ENCODE measurements at regions of chr5 and their contacts with region 1.

Region 1: GRCh38 chr5:172479044-172479783 is 24.9 kb upstream of the SH3PXD2B start:
- DNase-seq: no peak
- H3K4me3 ChIP-seq: no peak overlapping the region
- H3K27ac ChIP-seq: peak overlapping the region; percentile 54
- H3K4me1 ChIP-seq: peaks cover 9% of the 10 kb centered on the region
- H3K27me3 ChIP-seq: no peaks in the 10 kb centered on the region
- CTCF ChIP-seq: peak; percentile 88 to 98 (median 97)
- POLR2A ChIP-seq: no peak

Region 2: GRCh38 chr5:172697123-172698121 is 218.2 kb after region 1 on chr5:
- intact Hi-C with region 1: loop called (anchors 2 kb)
- DNase-seq: peak in 1 of 2 donors; percentile 92
- H3K4me3 ChIP-seq: peak overlapping the region; percentile 51 to 79
- H3K27ac ChIP-seq: peak overlapping the region; percentile 79
- H3K4me1 ChIP-seq: peaks cover 55% of the 10 kb centered on the region
- H3K27me3 ChIP-seq: no peaks in the 10 kb centered on the region
- CTCF ChIP-seq: peak; percentile 87 to 96 (median 93)
- POLR2A ChIP-seq: no peak